AG04449 (cell line): ENCODE measurements at regions of chr10 and their contacts with region 1.

Region 1: DNA sequence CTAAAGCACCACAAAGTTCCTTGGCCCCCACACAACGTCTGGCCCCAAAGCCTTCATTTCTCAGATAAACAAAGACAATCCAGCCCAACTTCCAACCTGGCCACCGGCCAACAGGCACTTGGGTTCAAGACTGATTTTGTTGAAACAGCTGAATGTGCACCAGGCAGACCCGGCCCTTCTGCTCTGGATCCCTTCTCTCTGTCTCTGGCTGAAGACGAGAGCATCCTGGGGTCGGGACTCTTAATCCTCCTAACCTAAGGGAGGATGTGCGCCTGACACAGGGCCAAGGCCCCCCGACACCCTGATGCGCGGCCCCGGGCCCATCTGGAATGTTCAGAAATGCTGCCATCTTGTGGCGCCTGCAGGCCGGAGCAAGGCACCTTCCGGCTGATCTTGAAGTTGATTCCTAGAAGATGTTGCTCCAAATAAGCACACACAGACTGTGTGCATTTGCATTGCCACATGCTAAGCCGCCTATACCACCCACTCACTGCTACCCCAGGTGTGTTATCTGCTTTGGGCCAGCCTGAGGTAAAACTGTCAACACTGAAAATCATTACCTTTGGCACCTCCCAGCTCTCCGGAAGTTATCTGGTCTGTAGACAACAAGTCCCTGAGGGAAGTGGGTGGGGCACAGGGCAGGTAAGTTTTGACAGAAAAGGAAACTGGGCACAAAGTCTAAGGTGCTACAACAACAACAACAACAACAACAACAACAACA is 98.4 kb upstream of the HABP2 start:
- DNase-seq: no peak
- H3K4me3 ChIP-seq: no peak overlapping the region; the same call in 1 of the 2 replicates
- CTCF ChIP-seq: peak; percentile 79

Region 2: GRCh38 chr10:113347508-113347907 is 107.0 kb before region 1 on chr10:
- CTCF ChIA-PET with region 1: no interaction called
- POLR2A ChIA-PET with region 1: no interaction called
- DNase-seq: no peak
- H3K4me3 ChIP-seq: no peak overlapping the region
- CTCF ChIP-seq: no peak

Region 3: DNA sequence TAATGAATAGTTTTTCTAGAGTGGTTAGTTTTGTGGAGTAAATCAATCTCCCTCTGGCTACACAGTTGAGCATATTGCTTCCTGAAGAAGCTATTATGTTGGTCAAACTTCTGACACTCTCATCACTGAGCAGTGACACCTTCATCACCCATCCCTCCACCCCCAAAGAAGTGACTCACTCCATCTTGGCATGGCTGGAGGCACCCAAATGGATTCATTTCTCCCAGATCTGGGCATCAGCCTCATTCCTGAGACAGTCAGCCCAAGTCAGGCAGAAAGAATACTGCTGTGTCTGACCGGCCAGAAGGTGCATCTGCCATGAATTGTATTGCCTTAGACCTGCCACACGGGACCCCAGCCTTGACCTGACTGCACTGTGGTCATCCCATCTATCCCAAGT is 18.6 kb before region 1 on chr10:
- CTCF ChIA-PET with region 1: interaction called, 18 read pairs
- POLR2A ChIA-PET with region 1: no interaction called
- DNase-seq: no peak
- H3K4me3 ChIP-seq: no peak overlapping the region
- CTCF ChIP-seq: no peak

Region 4: GRCh38 chr10:113441220-113441619 is 13.3 kb before region 1 on chr10:
- CTCF ChIA-PET with region 1: interaction called, 23 read pairs
- POLR2A ChIA-PET with region 1: no interaction called
- DNase-seq: no peak
- H3K4me3 ChIP-seq: no peak overlapping the region
- CTCF ChIP-seq: peak; percentile 16

Region 5: DNA sequence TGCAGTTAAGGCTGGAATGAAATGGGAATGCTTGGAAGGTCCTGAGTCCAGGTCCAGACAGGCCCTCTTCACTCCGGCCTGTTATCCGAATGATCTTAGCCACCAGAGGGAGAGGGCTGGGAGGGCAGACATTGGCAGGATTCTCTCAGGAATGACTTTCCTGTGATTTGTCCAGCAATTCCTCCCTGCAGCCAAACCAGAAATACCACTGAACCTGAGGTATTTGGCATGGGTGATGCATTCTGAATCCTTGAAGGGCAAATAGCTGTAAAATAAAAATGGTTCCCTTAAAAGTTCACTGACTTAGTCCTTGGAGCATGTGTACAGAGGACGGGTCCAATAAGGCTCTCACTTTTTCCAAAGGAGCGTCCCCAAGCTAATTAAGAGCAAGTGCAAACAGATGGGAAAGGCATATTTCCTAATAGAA is 20.9 kb after region 1 on chr10:
- CTCF ChIA-PET with region 1: interaction called, 15 read pairs
- POLR2A ChIA-PET with region 1: no interaction called
- DNase-seq: peak; percentile 63
- H3K4me3 ChIP-seq: no peak overlapping the region
- CTCF ChIP-seq: peak; percentile 31

Region 6: GRCh38 chr10:113524539-113525490 is 70.3 kb after region 1 on chr10:
- CTCF ChIA-PET with region 1: no interaction called
- POLR2A ChIA-PET with region 1: no interaction called
- DNase-seq: no peak
- H3K4me3 ChIP-seq: no peak overlapping the region
- CTCF ChIP-seq: no peak